ENCODE measurements at regions of chr13 and their contacts with region 1.

Region 1: DNA sequence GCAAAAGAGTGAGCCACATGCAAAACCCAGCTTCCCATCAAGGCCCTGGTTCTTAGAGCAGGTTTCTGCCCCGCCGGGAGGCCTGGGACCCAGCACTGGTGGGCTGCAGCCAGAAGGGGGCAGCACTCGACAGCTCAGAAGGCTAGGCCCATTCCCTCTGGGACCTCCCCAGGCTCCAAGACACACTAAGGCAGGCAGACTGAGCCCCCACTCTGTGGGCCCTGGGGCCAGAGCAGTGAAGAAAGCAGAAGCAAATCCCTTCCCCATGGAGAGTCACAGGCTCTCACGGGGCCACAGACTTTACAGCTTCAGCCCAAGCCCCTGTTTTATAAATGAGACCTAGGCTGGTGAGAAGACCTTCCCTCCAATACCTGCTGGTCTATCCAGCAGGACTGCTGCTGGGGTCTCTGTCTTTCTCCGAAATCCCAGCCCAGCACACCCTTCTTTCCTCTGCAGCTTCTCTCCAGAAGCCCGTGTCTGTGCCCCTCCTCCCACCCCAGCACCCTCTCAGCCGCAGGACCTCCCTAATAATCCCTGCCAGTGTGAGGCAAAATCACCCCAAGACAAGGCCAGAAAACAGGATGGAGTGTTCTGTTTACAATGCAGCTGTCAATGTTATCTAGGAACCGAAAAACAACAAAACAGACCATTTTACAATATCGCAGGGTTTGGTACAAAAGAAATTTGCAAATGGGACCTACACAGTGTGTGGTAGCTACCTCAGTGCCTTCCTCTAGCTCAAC is 109.3 kb downstream of the ABCC4 start:
- DNase-seq: peak; percentile 24
- H3K4me3 Mint-ChIP-seq: no peak overlapping the region
- H3K27ac Mint-ChIP-seq: no peak overlapping the region
- H3K4me1 Mint-ChIP-seq: peaks cover 11% of the 10 kb centered on the region
- H3K27me3 Mint-ChIP-seq: no peaks in the 10 kb centered on the region

Region 2: GRCh38 chr13:95301183-95301967 is 109.4 kb after region 1 on chr13 and contains the start of gene ABCC4:
- intact Hi-C with region 1: loop called (anchors 2 kb)
- DNase-seq: peak; percentile 51
- H3K4me3 Mint-ChIP-seq: peak within 1 kb of the TSS; percentile 95
- H3K27ac Mint-ChIP-seq: peak within 1 kb of the TSS; percentile 82
- H3K4me1 Mint-ChIP-seq: peaks cover 33% of the 10 kb centered on the region
- H3K27me3 Mint-ChIP-seq: peaks cover 15% of the 10 kb centered on the region
- total RNA-seq, gene ABCC4: 16.4 and 20.2 TPM in 2 replicates

Region 3: GRCh38 chr13:95378603-95379002 is 186.6 kb after region 1 on chr13:
- intact Hi-C with region 1: loop called (anchors 1 kb)
- DNase-seq: no peak
- H3K4me3 Mint-ChIP-seq: no peak overlapping the region
- H3K27ac Mint-ChIP-seq: no peak overlapping the region
- H3K4me1 Mint-ChIP-seq: no peaks in the 10 kb centered on the region
- H3K27me3 Mint-ChIP-seq: peaks cover 5% of the 10 kb centered on the region

Region 4: GRCh38 chr13:95480131-95480545 is 288.1 kb after region 1 on chr13:
- intact Hi-C with region 1: loop called (anchors 1 kb)
- DNase-seq: no peak
- H3K4me3 Mint-ChIP-seq: peak overlapping the region; percentile 21
- H3K27ac Mint-ChIP-seq: peak overlapping the region; percentile 23
- H3K4me1 Mint-ChIP-seq: peaks cover 25% of the 10 kb centered on the region
- H3K27me3 Mint-ChIP-seq: peaks cover 6% of the 10 kb centered on the region

Measured in activated T-helper 1 cell treated with anti-CD3 and anti-CD28 coated beads, Interleukin-12 subunit alpha, Interleukin-12 subunit beta, Interleukin-2, Interleukin-4 antibody, amounts not matched to agents 30 ng/mL and 10 ng/mL and 1 ng/mL, durations not matched to agents 14 hours and 24 hours and 36 hours (primary cell).